Naive thymus-derived CD4-positive, alpha-beta T cell (primary cell): ENCODE measurements at regions of chr10 and their contacts with region 1.

Region 1: DNA sequence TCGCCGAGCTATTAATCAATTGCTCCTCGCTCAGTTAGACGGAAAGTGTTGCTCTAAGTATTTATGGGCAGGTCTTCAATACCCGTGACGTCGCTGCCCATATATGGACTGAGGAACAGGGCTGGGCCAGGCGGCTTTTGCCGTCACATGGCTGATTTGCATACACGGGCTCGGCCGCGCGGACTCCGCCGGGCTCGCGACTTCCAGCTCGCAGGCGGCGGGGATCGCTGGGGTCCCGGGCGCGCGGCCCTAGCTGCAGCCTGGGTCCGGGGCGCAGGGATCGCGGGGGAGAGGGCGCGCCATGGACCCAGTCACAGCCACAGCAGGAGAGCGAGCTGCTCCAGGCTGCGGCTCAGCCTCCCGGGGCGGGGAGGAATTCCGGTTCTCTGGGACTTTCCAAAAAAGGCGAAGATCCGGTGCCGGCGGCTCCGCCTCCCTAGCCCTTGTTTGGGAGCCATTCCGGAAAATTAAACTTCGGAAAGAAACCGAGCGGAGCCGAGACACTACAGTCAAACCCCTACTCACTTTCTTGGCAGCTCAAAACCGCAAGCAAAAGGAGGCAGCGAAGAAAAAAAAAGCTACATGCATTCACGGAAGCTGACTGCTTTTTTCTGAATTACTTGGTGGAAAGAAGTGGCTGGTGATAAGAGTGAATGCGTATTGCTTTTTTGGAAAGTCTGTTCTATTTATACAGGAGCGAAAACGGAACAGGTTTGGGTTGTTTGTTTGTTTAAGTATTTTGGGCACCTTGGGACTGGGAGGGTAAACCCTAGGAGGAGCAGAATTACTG is at the start of gene EGR2:
- DNase-seq: peak; percentile 92 to 99 (median 98)
- ATAC-seq: peak; percentile 88
- H3K4me3 ChIP-seq: peak within 1 kb of the TSS; percentile 69
- H3K4me3 Mint-ChIP-seq: peak within 1 kb of the TSS; percentile 89 to 100 (median 98)
- H3K27ac ChIP-seq: peak within 1 kb of the TSS; percentile 76
- H3K27ac Mint-ChIP-seq: peak within 1 kb of the TSS; percentile 86 to 99 (median 95)
- H3K4me1 ChIP-seq: peaks cover 17 to 23% of the 10 kb centered on the region in 2 donors
- H3K4me1 Mint-ChIP-seq: peaks cover 36 to 62% (median 49%) of the 10 kb centered on the region in 7 donors
- H3K27me3 ChIP-seq: peaks cover 3 to 7% of the 10 kb centered on the region in 2 donors
- H3K27me3 Mint-ChIP-seq: peaks cover 26 to 74% (median 31%) of the 10 kb centered on the region in 5 donors
- total RNA-seq, gene EGR2: 0.46 to 14.2 (median 2.7) TPM

Region 2: GRCh38 chr10:61869774-61870525 is 946.6 kb before region 1 on chr10:
- CTCF ChIA-PET with region 1: no interaction called
- POLR2A ChIA-PET with region 1: no interaction called
- intact Hi-C with region 1: loop called in 1 of 2 experiments (anchors 1 kb)
- DNase-seq: no peak
- ATAC-seq: no peak
- H3K4me3 ChIP-seq: no peak overlapping the region
- H3K4me3 Mint-ChIP-seq: no peak overlapping the region
- H3K27ac ChIP-seq: no peak overlapping the region
- H3K27ac Mint-ChIP-seq: no peak overlapping the region
- H3K4me1 ChIP-seq: no peaks in the 10 kb centered on the region
- H3K4me1 Mint-ChIP-seq: peaks cover 0 to 10% (median 4%) of the 10 kb centered on the region in 7 donors
- H3K27me3 ChIP-seq: peaks cover 0 to 3% of the 10 kb centered on the region in 2 donors
- H3K27me3 Mint-ChIP-seq: peaks cover 0 to 15% (median 3%) of the 10 kb centered on the region in 5 donors

Region 3: GRCh38 chr10:62268399-62269114 is 548.0 kb before region 1 on chr10 and contains the start of gene RTKN2:
- CTCF ChIA-PET with region 1: no interaction called
- POLR2A ChIA-PET with region 1: no interaction called
- intact Hi-C with region 1: loop called (anchors 5 to 10 kb)
- DNase-seq: peak; percentile 52 to 76 (median 64)
- ATAC-seq: peak; percentile 89
- H3K4me3 ChIP-seq: peak within 1 kb of the TSS; percentile 69
- H3K4me3 Mint-ChIP-seq: peak within 1 kb of the TSS; percentile 84 to 96 (median 88)
- H3K27ac ChIP-seq: peak within 1 kb of the TSS; percentile 12
- H3K27ac Mint-ChIP-seq: peak within 1 kb of the TSS in 8 of 9 donors; percentile 8 to 75 (median 46)
- H3K4me1 ChIP-seq: peaks cover 0 to 5% of the 10 kb centered on the region in 2 donors
- H3K4me1 Mint-ChIP-seq: peaks cover 9 to 19% (median 14%) of the 10 kb centered on the region in 7 donors
- H3K27me3 ChIP-seq: peaks cover 0 to 9% of the 10 kb centered on the region in 2 donors
- H3K27me3 Mint-ChIP-seq: peaks cover 4 to 43% (median 16%) of the 10 kb centered on the region in 5 donors
- total RNA-seq, gene RTKN2: 1.4 to 7.8 (median 3.0) TPM

Region 4: DNA sequence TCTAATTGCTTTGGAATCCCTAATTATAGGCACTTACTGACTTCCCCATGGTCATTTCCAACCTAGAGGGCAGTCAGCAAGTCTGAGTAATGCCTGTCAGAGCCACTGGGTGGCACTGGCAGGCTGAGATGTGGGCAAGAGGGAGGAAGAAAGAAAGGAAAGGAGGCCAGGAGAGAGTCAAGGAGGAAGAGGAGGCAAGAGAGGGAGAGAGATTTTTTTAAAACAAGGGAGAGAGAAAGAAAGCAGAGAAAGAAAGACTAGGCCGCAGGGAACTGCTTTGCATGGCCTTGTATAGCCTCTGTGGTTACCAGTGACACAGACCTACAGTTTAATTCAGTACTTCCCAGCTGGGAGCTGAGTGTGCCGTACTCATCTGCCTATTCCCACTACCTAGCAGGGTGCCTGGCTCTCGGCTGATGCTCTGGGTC is 222.4 kb before region 1 on chr10:
- CTCF ChIA-PET with region 1: interaction called, 21 read pairs
- POLR2A ChIA-PET with region 1: no interaction called
- intact Hi-C with region 1: loop called (anchors 1 kb)
- DNase-seq: peak in 8 of 9 donors; percentile 22 to 58 (median 40)
- ATAC-seq: peak; percentile 84
- H3K4me3 ChIP-seq: no peak overlapping the region
- H3K4me3 Mint-ChIP-seq: no peak overlapping the region
- H3K27ac ChIP-seq: no peak overlapping the region
- H3K27ac Mint-ChIP-seq: no peak overlapping the region
- H3K4me1 ChIP-seq: no peaks in the 10 kb centered on the region
- H3K4me1 Mint-ChIP-seq: peaks cover 0 to 4% (median 0%) of the 10 kb centered on the region in 7 donors
- H3K27me3 ChIP-seq: no peaks in the 10 kb centered on the region
- H3K27me3 Mint-ChIP-seq: peaks cover 0 to 26% (median 10%) of the 10 kb centered on the region in 5 donors

Region 5: DNA sequence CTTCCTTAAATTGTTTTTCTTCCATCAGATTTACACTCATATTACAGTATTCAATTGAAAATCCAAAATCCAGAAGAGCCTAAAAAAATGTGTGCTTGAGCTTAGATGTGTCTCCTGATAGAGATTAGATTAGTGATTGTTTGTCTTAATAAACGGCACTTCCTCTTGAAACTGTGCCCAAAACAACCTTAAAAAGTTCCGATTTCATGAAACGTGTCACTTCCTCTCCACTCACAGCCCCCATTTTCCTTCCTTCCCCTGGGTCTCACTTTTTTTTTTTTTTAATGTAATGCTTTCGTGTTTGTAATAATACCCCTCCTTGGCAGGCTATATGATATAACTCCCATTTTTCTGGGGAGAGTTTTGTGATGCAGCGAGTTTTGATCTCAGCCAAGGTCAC is 126.8 kb before region 1 on chr10:
- CTCF ChIA-PET with region 1: no interaction called
- POLR2A ChIA-PET with region 1: no interaction called
- intact Hi-C with region 1: loop called in 1 of 2 experiments (anchors 5 kb)
- DNase-seq: peak in 4 of 9 donors; percentile 12 to 24 (median 18)
- ATAC-seq: peak; percentile 43
- H3K4me3 ChIP-seq: peak overlapping the region; percentile 23
- H3K4me3 Mint-ChIP-seq: peak overlapping the region; percentile 6 to 79 (median 67)
- H3K27ac ChIP-seq: no peak overlapping the region
- H3K27ac Mint-ChIP-seq: peak overlapping the region in 7 of 9 donors; percentile 4 to 65 (median 50)
- H3K4me1 ChIP-seq: peaks cover 30 to 37% of the 10 kb centered on the region in 2 donors
- H3K4me1 Mint-ChIP-seq: peaks cover 27 to 57% (median 48%) of the 10 kb centered on the region in 7 donors
- H3K27me3 ChIP-seq: no peaks in the 10 kb centered on the region
- H3K27me3 Mint-ChIP-seq: no peaks in the 10 kb centered on the region

Region 6: GRCh38 chr10:62851442-62851841 is 34.9 kb after region 1 on chr10:
- CTCF ChIA-PET with region 1: no interaction called
- POLR2A ChIA-PET with region 1: no interaction called
- intact Hi-C with region 1: loop called in 1 of 2 experiments (anchors 1 kb)
- DNase-seq: no peak
- ATAC-seq: no peak
- H3K4me3 ChIP-seq: no peak overlapping the region
- H3K4me3 Mint-ChIP-seq: no peak overlapping the region
- H3K27ac ChIP-seq: no peak overlapping the region
- H3K27ac Mint-ChIP-seq: no peak overlapping the region
- H3K4me1 ChIP-seq: peaks cover 0 to 39% of the 10 kb centered on the region in 2 donors
- H3K4me1 Mint-ChIP-seq: peaks cover 10 to 54% (median 14%) of the 10 kb centered on the region in 7 donors
- H3K27me3 ChIP-seq: no peaks in the 10 kb centered on the region
- H3K27me3 Mint-ChIP-seq: peaks cover 0 to 18% (median 13%) of the 10 kb centered on the region in 5 donors

Region 7: DNA sequence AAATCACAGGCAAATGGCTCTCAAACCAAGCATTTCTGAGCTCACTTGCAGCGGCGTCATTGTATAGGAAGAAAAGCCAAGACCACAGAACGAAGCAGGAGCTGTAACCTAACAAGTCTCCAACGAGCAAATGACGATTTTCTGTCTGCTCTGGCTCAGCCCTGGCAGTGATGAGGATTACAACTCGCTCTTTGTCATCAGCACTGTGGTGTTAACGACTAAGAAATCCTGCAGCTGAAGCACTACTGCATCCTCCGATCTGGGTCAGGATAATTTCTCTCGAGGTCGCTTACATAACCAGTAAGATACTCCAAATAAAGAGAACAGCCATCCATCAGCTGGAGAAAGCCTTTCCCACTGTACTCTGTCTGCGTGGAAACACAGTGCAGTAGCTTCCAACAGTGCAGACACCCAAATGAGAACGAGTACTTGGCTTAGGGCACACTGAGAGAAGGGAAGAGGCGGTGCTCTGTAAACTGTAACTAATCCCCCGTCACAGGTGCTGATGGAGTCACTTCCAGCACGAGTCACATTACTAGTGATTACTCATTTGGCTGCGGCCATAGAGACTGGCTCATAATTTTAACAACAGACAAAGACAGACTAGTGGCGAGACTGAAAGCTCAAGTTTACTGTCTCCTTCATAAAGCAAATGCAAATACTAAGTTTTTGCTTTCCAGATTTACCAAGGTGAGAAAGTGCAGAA is 452.4 kb after region 1 on chr10:
- CTCF ChIA-PET with region 1: no interaction called
- POLR2A ChIA-PET with region 1: no interaction called
- intact Hi-C with region 1: loop called (anchors 1 kb)
- DNase-seq: peak; percentile 55 to 95 (median 89)
- ATAC-seq: peak; percentile 95
- H3K4me3 ChIP-seq: peak overlapping the region; percentile 60
- H3K4me3 Mint-ChIP-seq: peak overlapping the region; percentile 93 to 99 (median 98)
- H3K27ac ChIP-seq: peak overlapping the region; percentile 91
- H3K27ac Mint-ChIP-seq: peak overlapping the region; percentile 97 to 100 (median 99)
- H3K4me1 ChIP-seq: peaks cover 9 to 19% of the 10 kb centered on the region in 2 donors
- H3K4me1 Mint-ChIP-seq: peaks cover 9 to 33% (median 19%) of the 10 kb centered on the region in 7 donors
- H3K27me3 ChIP-seq: no peaks in the 10 kb centered on the region
- H3K27me3 Mint-ChIP-seq: no peaks in the 10 kb centered on the region